ENCODE measurements at regions of chr1 and their contacts with region 1.

Region 1: GRCh38 chr1:44500181-44501046 is 95.4 kb downstream of the RNF220 start:
- DNase-seq: peak; percentile 37
- H3K4me3 Mint-ChIP-seq: no peak overlapping the region
- H3K27ac Mint-ChIP-seq: no peak overlapping the region
- H3K4me1 Mint-ChIP-seq: peaks cover 8% of the 10 kb centered on the region
- H3K27me3 Mint-ChIP-seq: peaks cover 12% of the 10 kb centered on the region
- CTCF ChIP-seq: no peak

Region 2: DNA sequence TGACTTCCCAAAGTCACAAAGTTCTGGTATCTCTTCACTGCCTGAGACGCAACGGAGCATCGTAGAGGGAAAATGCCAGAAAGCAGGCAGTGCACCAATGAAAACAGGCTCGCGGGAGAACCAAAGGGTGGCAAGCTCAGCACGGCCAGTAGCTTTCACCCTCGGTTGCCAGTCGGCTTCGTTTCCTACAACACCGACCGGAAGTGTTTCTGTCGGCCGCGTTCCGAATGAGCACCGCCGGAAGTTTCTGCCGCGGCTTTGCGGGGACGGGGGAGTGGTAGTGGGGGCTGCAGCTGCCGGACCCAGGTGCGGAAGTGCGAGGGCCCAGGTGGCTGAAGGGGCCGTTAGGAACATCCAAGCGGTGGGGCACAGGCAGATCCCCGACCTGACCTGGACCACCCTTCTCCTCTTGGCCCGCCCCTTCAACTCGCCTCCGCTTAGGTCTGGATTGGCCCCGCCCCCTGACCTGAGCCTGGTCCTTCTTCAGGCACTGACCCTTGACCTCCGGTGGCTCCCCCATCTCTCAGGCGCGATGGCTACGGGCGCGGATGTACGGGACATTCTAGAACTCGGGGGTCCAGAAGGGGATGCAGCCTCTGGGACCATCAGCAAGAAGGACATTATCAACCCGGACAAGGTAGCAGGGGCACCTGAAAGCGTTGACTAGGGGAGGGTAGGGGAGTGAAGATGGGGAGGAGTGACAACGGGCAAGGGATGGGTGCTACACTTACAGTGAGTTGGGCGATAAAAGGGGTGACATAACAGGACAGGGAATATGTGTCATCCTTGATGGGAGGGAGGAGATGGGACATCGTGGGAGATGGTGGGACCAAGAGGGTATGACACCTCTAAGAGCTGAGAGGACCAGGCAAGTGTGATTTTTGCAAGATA is 286.9 kb before region 1 on chr1 and contains the start of gene DMAP1:
- CTCF ChIA-PET with region 1: interaction called, 10 read pairs
- intact Hi-C with region 1: loop called (anchors 10 kb)
- DNase-seq: peak; percentile 79
- H3K4me3 Mint-ChIP-seq: peak within 1 kb of the TSS; percentile 81
- H3K27ac Mint-ChIP-seq: peak within 1 kb of the TSS; percentile 72
- H3K4me1 Mint-ChIP-seq: peaks cover 17% of the 10 kb centered on the region
- H3K27me3 Mint-ChIP-seq: no peaks in the 10 kb centered on the region
- CTCF ChIP-seq: no peak
- total RNA-seq, gene DMAP1: 40.9 and 42.9 TPM in 2 replicates

Region 3: DNA sequence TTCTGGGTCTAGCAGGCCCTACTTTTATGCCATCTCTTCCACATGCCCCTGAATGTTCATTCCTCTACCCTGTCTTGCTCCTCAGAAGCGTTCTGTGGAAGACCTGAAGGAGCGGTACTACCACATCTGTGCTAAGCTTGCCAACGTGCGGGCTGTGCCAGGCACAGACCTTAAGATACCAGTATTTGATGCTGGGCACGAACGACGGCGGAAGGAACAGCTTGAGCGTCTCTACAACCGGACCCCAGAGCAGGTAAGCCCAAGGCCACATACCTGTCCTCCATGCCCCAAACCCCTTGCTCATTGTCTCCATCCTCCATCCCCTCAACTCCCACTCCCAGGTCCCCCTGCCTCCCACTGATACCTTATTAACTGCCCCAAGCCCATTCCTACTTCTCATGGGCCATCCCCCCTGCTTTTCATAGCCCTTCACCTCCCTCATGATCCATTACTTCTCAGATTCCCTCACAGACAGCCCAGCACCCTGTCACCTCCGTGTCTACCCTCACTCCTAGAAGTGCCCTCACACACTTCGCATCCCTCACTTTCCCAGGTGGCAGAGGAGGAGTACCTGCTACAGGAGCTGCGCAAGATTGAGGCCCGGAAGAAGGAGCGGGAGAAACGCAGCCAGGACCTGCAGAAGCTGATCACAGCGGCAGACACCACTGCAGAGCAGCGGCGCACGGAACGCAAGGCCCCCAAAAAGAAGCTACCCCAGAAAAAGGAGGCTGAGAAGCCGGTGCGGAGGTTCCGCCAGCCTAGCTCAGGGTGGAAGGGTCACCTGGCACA is 281.7 kb before region 1 on chr1:
- CTCF ChIA-PET with region 1: interaction called, 10 read pairs
- intact Hi-C with region 1: loop called (anchors 10 kb)
- DNase-seq: no peak
- H3K4me3 Mint-ChIP-seq: no peak overlapping the region
- H3K27ac Mint-ChIP-seq: no peak overlapping the region
- H3K4me1 Mint-ChIP-seq: peaks cover 14% of the 10 kb centered on the region
- H3K27me3 Mint-ChIP-seq: no peaks in the 10 kb centered on the region
- CTCF ChIP-seq: no peak

Region 4: DNA sequence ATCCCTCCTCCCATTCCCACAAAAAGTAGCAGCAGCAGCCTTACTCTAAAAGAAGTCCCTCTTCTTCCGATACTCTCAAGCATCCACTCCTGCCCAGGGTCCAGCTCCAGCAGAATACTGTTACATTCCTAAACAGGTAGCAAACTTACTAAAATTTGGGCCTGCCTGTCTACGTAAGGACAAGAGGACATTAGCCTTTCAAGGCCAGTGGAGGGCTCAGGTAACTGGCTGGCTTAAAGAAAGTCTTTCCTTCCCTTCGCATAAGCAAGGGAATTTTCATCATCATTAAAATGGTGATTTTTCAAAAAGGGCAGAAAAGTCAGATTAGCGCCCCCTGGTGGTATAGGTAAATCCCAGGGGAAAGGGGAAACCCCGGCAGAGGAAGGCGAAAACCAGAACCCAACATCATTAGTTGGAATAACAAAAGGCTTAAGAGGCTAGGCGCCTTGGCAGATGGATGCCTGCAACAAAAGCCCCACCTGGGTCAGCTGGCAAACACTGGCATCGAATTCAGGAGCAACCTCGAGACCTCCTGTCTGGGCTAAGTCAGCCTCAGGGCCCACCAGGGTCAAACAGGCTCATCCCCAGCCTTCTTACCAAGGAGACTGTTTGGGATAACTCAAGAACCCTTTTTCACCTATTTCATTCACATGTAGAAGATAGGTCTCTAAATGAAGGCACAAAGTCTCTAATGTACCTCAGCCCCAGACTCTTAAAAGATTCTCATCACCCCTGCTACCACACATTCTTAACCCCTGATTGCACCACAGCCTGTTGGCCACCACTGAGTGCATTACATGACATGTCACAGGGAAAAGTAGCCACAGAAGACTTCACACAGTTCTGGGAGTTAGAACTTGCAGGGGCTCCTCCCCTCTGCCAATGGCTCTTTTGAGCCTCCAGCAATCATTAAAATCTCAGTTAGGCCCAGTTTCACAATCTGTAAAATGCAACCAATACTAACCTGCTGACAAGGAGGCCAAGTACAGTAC is 182.0 kb before region 1 on chr1:
- CTCF ChIA-PET with region 1: no interaction called
- intact Hi-C with region 1: no loop called
- DNase-seq: peak; percentile 62
- H3K4me3 Mint-ChIP-seq: no peak overlapping the region
- H3K27ac Mint-ChIP-seq: no peak overlapping the region
- H3K4me1 Mint-ChIP-seq: peaks cover 9% of the 10 kb centered on the region
- H3K27me3 Mint-ChIP-seq: no peaks in the 10 kb centered on the region
- CTCF ChIP-seq: peak; percentile 79

Region 5: DNA sequence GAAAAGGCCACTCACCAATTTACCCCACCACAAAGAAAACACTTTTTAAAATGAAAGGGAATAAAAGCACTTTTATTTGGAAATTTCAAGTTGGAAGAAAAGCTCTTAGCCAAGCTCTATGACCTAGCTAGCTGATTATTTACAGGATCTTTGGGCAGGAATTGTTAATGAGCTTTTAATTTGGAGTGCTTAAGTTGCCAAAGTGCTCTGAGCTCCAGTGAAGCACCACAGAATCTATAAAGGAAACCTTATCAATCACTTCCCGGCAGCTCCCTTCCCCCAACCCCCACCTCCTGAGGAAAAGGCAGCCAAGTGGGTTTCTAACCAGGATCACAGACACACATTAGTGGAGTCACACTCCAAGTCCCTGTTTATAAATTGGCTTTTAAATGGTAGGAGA is 146.8 kb before region 1 on chr1:
- CTCF ChIA-PET with region 1: interaction called, 11 read pairs
- intact Hi-C with region 1: no loop called
- DNase-seq: no peak
- H3K4me3 Mint-ChIP-seq: peak overlapping the region; percentile 79
- H3K27ac Mint-ChIP-seq: no peak overlapping the region
- H3K4me1 Mint-ChIP-seq: peaks cover 29% of the 10 kb centered on the region
- H3K27me3 Mint-ChIP-seq: no peaks in the 10 kb centered on the region
- CTCF ChIP-seq: no peak

Region 6: DNA sequence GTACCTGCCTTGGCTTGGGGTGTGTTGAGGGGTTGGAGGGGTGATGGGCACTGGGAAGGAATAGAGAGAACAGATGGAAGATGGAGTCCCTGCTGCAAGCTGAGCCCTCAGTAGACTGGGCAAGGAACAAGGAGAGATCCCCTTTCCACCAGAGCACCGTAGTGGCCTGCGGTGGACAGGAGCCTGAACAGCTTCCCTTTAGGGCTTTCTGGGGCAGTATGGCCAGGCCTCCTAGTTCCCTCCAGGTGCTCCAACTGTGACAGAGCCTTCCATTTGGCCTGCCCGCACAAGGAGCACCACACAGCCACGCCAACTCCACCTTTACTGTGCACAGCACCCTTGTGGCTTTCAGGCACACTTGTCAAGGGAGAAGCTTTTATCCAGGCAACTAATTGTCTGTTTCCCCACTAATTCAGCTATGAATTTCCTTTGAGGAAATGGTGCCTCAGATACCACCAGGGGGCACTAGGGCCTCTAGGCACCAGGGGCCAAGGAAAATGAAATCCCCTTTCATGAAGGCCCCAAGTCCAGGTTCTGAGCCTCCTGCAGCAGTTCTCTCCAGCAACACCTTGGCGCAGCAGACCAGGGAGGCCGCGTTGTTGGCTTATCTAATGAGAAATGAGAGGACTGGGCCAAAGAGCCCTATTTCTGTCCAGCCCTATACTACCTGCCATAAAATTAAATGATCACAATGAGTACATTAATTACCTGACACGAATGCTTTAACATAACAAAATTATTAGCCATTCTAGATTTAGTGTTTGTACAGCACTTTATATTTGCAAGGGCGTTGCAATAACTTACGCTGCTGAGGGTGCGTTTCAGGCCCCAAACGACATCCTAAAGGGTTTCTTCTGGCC is 122.3 kb before region 1 on chr1:
- CTCF ChIA-PET with region 1: interaction called, 7 read pairs
- intact Hi-C with region 1: loop called (anchors 5 kb)
- DNase-seq: peak; percentile 65
- H3K4me3 Mint-ChIP-seq: no peak overlapping the region
- H3K27ac Mint-ChIP-seq: no peak overlapping the region
- H3K4me1 Mint-ChIP-seq: no peaks in the 10 kb centered on the region
- H3K27me3 Mint-ChIP-seq: peaks cover 20% of the 10 kb centered on the region
- CTCF ChIP-seq: peak; percentile 71

Region 7: DNA sequence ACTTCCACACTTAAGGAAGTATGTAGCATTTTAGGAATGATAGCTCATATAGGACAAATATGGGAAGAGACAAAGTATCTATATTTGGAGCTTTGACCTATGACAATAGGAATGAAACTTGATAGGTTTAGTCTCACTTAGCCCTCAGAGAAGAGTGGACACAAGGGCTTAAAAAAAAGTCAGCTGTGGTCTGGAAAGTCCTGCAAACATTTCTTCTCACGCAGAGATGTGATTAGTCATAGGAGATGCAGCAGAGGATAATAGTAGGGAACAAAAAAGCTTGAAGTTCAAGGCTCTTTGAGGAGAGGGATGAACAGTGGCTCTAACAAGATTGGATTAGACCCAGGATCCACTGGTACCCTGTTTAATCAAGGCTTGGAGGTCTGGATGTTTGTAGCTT is 110.1 kb before region 1 on chr1:
- CTCF ChIA-PET with region 1: no interaction called
- intact Hi-C with region 1: no loop called
- DNase-seq: no peak
- H3K4me3 Mint-ChIP-seq: no peak overlapping the region
- H3K27ac Mint-ChIP-seq: no peak overlapping the region
- H3K4me1 Mint-ChIP-seq: no peaks in the 10 kb centered on the region
- H3K27me3 Mint-ChIP-seq: peaks cover 8% of the 10 kb centered on the region
- CTCF ChIP-seq: no peak

Region 8: DNA sequence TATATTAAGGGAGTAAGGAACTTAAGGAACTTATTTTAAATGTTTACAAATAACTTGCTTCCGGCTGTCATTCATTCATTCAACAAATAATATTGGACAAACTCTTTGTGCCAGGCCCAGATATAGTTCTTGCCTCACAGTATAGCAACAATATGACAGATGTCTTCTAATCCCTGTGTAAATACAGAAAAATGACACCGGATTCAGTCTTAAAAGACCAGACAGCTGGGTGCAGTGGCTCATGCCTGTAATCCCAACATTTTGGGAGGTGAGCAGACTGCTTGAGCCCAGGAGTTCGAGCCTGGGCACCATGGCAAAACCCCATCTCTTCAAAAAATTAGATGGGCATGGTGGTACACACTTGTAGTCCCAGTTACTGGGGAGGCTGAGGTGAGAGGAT is 462.3 kb after region 1 on chr1:
- CTCF ChIA-PET with region 1: no interaction called
- intact Hi-C with region 1: no loop called
- DNase-seq: no peak
- H3K4me3 Mint-ChIP-seq: no peak overlapping the region
- H3K27ac Mint-ChIP-seq: no peak overlapping the region
- H3K4me1 Mint-ChIP-seq: no peaks in the 10 kb centered on the region
- H3K27me3 Mint-ChIP-seq: no peaks in the 10 kb centered on the region
- CTCF ChIP-seq: no peak